GM10248 (cell line): ENCODE measurements at regions of chr11 and their contacts with region 1.

Region 1: GRCh38 chr11:14373931-14374646 is 15.1 kb upstream of the RRAS2 start:
- DNase-seq: no peak
- CTCF ChIP-seq: no peak

Region 2: DNA sequence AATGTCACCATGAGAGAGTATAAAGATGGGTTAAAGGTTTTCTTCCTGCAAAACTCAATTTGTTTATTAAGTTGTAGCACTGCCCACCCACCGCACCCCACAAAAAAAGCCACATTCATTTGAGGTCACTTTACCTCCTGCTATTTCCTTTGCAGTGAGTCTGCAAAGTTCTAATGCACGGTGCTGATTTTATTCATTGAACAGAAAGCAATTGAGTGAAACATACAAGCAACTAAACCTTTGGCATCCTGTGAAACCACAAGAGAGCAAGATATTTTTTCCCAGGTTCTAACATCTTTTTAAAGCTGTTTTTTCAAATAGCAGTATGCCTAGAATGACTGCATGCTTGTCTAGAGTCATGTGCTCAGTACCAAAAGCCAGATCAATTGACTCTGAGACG is 54.1 kb before region 1 on chr11:
- CTCF ChIA-PET with region 1: no interaction called
- POLR2A ChIA-PET with region 1: no interaction called
- DNase-seq: peak; percentile 20
- CTCF ChIP-seq: no peak

Region 3: DNA sequence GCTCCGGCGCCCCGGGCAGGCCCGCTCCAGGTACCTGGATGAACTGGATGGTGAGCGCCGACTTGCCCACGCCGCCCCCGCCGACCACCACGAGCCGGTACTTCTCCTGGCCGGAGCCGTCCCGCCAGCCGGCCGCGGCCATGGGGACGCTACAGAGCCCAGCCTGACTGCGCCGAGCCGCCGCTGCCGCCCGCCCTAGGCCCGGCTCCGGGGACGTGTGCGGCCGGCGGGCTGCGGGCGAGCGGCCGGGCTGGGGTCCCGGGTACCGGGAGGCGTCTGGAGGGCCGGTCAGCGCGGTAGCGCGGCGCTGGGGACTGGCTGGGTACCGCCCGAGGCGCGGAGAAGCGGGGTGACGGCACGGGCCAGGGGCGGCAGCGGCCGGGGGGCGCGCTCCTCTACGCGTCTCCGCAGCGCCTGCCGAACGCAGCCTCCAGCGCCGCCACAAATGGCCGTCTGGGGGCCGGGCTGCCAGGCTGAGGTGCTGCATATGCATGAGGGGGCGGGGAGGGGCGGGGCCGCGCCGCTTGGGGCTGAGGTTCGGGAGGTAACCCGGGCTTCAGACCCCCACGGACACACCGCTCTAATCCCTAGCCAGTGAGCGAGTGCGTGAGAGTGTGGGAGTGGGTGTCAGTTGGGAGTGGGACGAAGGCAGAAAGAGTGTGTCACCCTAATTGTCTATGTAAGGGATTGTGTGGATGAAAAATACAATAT is 15.2 kb before region 1 on chr11 and contains the start of gene RRAS2:
- CTCF ChIA-PET with region 1: interaction called, 17 read pairs
- POLR2A ChIA-PET with region 1: no interaction called
- DNase-seq: peak; percentile 89
- CTCF ChIP-seq: no peak

Region 4: DNA sequence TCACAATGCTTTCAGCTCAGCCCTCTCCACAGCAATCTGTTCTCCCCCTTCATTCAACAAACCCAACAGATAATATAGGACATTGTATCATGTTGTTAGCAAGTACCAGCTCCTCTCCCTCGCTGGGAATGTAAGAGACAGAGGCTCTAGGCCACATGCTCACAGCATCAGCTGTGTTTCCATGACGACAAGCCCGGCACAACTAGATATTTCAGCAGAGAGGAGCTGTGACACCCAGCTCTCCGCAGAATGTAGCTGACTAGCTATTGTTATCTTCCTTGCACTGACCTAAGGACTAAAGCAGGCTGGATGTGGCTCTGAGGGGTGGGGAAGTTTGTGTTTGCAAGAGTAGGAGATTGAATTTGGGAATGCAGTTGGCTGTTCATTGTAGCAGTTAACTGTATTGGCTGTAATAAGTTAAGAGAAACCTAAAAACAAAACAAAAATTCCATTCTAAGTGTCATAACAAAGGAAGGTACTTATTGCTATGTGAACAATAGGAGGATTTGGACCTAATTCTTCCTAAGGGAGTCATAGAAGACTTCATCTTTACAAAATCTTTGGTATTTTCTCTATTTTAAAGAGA is 12.9 kb after region 1 on chr11:
- CTCF ChIA-PET with region 1: interaction called, 15 read pairs
- POLR2A ChIA-PET with region 1: no interaction called
- DNase-seq: no peak
- CTCF ChIP-seq: no peak

Region 5: GRCh38 chr11:14656536-14657457 is 282.7 kb after region 1 on chr11:
- CTCF ChIA-PET with region 1: no interaction called
- POLR2A ChIA-PET with region 1: no interaction called
- DNase-seq: no peak
- CTCF ChIP-seq: no peak